ENCODE measurements at regions of chr3 and their contacts with region 1.

Region 1: GRCh38 chr3:130892759-130893375 is 1.0 kb upstream of the ATP2C1 start:
- DNase-seq: peak; percentile 85
- H3K4me3 Mint-ChIP-seq: peak overlapping the region; percentile 83
- H3K27ac Mint-ChIP-seq: peak overlapping the region; percentile 98
- H3K4me1 Mint-ChIP-seq: peaks cover 12% of the 10 kb centered on the region
- H3K27me3 Mint-ChIP-seq: no peaks in the 10 kb centered on the region
- CTCF ChIP-seq: peak; percentile 68

Region 2: DNA sequence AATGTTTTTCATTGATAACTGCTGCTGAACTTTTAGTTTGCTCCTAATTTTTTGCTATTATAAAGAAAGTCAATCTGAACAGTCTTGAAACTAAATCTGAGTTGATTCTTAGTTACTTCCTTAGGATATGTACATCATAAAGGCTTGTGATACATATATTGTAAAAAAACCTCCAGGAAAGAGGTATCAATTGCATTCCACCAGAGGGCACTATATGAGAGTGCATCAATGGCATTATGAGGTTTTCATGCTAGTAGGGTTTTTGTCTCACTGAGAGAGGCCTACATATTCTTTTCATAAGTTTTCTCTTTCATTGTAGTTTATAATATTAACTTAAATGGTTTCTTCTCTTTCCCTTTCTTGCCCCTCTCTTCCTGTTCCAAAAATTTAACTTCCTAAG is 193.1 kb before region 1 on chr3:
- CTCF ChIA-PET with region 1: interaction called, 5 read pairs
- POLR2A ChIA-PET with region 1: no interaction called
- intact Hi-C with region 1: loop called (anchors 1 kb)
- DNase-seq: peak; percentile 44
- H3K4me3 Mint-ChIP-seq: no peak overlapping the region
- H3K27ac Mint-ChIP-seq: no peak overlapping the region
- H3K4me1 Mint-ChIP-seq: no peaks in the 10 kb centered on the region
- H3K27me3 Mint-ChIP-seq: no peaks in the 10 kb centered on the region
- CTCF ChIP-seq: peak; percentile 29

Region 3: DNA sequence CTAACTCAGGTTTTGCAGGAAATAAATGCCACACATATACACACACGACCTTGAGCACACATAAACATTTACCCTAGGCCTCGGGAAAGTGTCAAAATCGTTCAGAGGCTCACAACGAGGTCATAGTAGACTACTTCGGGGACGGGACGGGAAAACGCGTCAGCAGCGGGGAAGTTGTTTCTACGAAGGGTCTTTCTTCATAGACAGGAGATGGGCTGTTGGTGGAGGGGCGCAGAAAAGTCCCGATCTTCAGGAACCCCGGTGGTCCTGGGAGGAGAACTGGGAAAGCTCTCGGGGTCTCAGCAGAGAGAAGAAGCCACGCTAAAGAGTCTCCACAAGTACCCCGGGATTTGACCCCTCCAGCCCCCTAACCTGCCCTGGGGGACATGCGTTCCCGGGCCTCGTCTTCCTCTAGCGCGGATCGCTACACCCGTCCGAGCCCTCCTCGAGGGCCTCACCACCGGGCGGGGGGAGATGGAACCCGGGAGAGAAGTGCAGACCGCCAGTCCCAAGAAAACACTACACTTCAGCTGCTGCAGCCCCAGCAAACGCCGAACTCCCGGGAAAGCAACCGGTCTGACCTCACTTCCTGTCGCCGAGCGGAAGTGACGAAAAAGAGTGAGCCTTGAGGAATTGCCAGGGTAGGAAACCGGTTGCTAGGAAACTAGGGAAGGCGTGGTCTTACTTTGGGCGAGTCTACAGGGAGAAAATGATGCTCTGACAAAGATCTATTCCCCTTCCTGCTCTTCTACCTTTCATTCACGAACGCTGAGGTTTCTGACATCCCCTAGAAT is 146.4 kb before region 1 on chr3 and contains the start of gene PIK3R4:
- CTCF ChIA-PET with region 1: interaction called, 10 read pairs
- POLR2A ChIA-PET with region 1: interaction called, 62 read pairs
- intact Hi-C with region 1: no loop called
- DNase-seq: peak; percentile 98
- H3K4me3 Mint-ChIP-seq: peak within 1 kb of the TSS; percentile 79
- H3K27ac Mint-ChIP-seq: peak within 1 kb of the TSS; percentile 83
- H3K4me1 Mint-ChIP-seq: peaks cover 19% of the 10 kb centered on the region
- H3K27me3 Mint-ChIP-seq: no peaks in the 10 kb centered on the region
- CTCF ChIP-seq: no peak
- total RNA-seq, gene PIK3R4: 13.9 and 16.2 TPM in 2 replicates

Region 4: GRCh38 chr3:130811557-130811956 is 81.3 kb before region 1 on chr3:
- CTCF ChIA-PET with region 1: no interaction called
- POLR2A ChIA-PET with region 1: no interaction called
- intact Hi-C with region 1: no loop called
- DNase-seq: no peak
- H3K4me3 Mint-ChIP-seq: no peak overlapping the region
- H3K27ac Mint-ChIP-seq: no peak overlapping the region
- H3K4me1 Mint-ChIP-seq: no peaks in the 10 kb centered on the region
- H3K27me3 Mint-ChIP-seq: no peaks in the 10 kb centered on the region
- CTCF ChIP-seq: no peak

Region 5: GRCh38 chr3:130850044-130850797 is 42.6 kb before region 1 on chr3:
- CTCF ChIA-PET with region 1: interaction called, 13 read pairs
- POLR2A ChIA-PET with region 1: interaction called, 9 read pairs
- intact Hi-C with region 1: no loop called
- DNase-seq: peak; percentile 67
- H3K4me3 Mint-ChIP-seq: no peak overlapping the region
- H3K27ac Mint-ChIP-seq: no peak overlapping the region
- H3K4me1 Mint-ChIP-seq: peaks cover 7% of the 10 kb centered on the region
- H3K27me3 Mint-ChIP-seq: peaks cover 10% of the 10 kb centered on the region
- CTCF ChIP-seq: no peak

Region 6: DNA sequence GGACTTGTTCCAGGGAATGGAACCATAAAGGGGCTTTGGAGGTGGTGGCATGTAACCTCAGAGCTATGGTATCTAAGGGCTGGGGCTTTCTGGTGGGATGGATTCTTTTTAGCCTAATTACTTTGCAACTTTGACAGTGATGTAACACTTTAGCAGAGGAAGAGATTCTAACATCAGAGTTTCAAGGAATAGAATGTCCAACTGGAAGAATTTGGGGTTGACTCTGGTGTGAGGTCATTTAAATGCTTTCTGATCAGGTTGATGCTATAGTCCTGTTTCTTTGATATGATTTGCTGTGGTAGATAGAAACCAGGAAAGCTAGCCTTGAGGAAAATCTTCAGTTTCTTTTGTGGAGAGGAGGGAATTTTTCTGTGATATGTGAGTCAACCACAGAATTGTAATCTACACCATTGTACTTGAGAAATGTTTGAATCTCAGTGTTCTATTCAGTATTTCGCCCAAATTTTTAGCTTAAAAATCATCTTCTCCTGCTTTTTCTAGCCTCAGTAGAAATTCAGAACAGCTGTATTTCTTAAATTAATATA is 41.0 kb after region 1 on chr3:
- CTCF ChIA-PET with region 1: interaction called, 13 read pairs
- POLR2A ChIA-PET with region 1: interaction called, 8 read pairs
- intact Hi-C with region 1: no loop called
- DNase-seq: no peak
- H3K4me3 Mint-ChIP-seq: no peak overlapping the region
- H3K27ac Mint-ChIP-seq: no peak overlapping the region
- H3K4me1 Mint-ChIP-seq: peaks cover 6% of the 10 kb centered on the region
- H3K27me3 Mint-ChIP-seq: no peaks in the 10 kb centered on the region
- CTCF ChIP-seq: no peak

Region 7: DNA sequence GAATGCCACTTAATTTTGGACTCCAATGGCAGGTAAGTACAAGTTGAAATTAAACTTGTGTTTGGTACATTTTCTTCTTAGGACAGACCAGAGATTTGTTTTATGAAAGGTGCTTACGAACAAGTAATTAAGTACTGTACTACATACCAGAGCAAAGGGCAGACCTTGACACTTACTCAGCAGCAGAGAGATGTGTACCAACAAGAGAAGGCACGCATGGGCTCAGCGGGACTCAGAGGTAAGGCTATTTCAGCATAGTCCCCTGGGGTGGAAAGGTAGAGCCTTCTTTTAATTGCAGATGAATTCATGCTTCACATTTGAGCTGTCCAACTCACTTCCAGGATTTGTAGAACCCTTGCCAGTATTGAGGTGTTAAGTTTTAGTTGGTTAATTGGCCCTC is 82.4 kb after region 1 on chr3:
- CTCF ChIA-PET with region 1: interaction called, 15 read pairs
- POLR2A ChIA-PET with region 1: interaction called, 6 read pairs
- intact Hi-C with region 1: no loop called
- DNase-seq: peak; percentile 37
- H3K4me3 Mint-ChIP-seq: no peak overlapping the region
- H3K27ac Mint-ChIP-seq: no peak overlapping the region
- H3K4me1 Mint-ChIP-seq: no peaks in the 10 kb centered on the region
- H3K27me3 Mint-ChIP-seq: no peaks in the 10 kb centered on the region
- CTCF ChIP-seq: no peak

Region 8: DNA sequence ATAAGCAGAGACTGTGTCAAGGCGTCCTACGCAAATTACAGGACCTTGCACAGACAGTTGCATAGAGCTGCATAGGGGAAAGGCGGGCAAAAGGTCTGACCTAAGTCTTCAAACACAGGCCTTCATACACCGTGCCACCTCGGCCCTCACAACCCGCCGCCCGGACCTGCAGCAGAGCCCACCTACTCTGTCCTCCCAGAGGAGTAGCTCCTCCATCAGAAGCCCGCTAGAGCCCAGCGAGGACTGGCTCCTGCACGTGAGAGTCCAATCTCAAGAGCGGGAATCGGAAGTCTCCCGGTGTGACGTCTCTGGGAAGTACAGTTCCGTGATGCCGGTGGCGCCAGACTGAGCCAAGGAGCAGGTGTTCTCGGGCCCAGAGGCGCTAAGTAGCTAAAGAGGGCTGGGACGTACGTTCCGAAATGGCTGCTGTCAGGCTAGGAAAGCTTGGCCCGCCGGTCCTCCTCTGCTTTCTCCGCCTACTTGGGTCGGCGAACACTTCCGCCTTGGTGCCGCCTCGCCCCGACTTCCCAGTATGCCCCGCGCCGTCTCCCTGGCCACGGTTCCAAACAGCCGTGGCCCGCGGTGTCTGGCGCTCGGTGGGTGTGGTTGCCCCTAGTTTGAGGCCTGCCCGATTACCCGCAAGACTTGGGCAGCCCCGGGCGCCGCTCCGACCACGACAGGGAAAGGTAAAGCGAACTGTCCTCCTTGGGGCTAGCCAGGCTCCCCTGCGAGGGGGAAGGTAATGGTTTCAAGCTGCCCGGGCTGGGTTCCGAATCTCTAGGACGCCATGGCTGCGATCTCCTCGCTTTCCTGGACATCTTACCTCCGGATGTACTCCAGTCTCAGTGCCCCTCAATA is 133.7 kb after region 1 on chr3 and contains the starts of genes ASTE1 and NEK11:
- CTCF ChIA-PET with region 1: interaction called, 4 read pairs
- POLR2A ChIA-PET with region 1: interaction called, 15 read pairs
- intact Hi-C with region 1: loop called (anchors 2 kb)
- DNase-seq: peak; percentile 85
- H3K4me3 Mint-ChIP-seq: peak within 1 kb of the TSS; percentile 90
- H3K27ac Mint-ChIP-seq: peak within 1 kb of the TSS; percentile 99
- H3K4me1 Mint-ChIP-seq: peaks cover 8% of the 10 kb centered on the region
- H3K27me3 Mint-ChIP-seq: no peaks in the 10 kb centered on the region
- CTCF ChIP-seq: no peak
- total RNA-seq, gene ASTE1: 2.7 and 3.3 TPM in 2 replicates
- total RNA-seq, gene NEK11: 6.9 and 10.2 TPM in 2 replicates

Measured in MCF 10A (cell line).